Activated naive CD4-positive, alpha-beta T cell treated with anti-CD3 and anti-CD28 coated beads for 36 hours (primary cell): ENCODE measurements at regions of chr16 and their contacts with region 1.

Region 1: GRCh38 chr16:53435066-53435688 is 906 bp downstream of the RBL2 start:
- DNase-seq: peak; percentile 71
- H3K4me3 Mint-ChIP-seq: peak overlapping the region; percentile 96
- H3K27ac Mint-ChIP-seq: peak overlapping the region; percentile 93
- H3K4me1 Mint-ChIP-seq: peaks cover 36% of the 10 kb centered on the region
- H3K27me3 Mint-ChIP-seq: no peaks in the 10 kb centered on the region

Region 2: DNA sequence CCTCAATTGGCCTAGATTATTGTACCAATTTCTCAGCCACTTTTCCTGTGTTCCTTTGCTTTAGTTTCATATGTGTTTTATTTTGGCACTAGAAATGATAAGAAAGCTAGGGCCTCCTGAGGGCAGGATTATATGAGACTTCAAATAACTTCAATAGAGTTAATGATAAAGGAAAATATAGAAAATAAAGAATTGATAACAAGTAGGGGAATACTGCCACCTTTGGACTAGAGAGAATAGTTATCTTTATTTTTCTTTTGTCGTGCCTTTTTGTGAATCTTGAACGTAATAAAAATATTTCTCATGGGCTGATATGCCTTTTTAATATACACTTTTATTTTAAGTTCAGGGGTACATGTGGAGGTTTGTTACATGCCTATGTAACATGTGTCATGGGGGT is 30.2 kb before region 1 on chr16:
- CTCF ChIA-PET with region 1: no interaction called
- intact Hi-C with region 1: no loop called
- DNase-seq: no peak
- H3K4me3 Mint-ChIP-seq: no peak overlapping the region
- H3K27ac Mint-ChIP-seq: no peak overlapping the region
- H3K4me1 Mint-ChIP-seq: no peaks in the 10 kb centered on the region
- H3K27me3 Mint-ChIP-seq: no peaks in the 10 kb centered on the region

Region 3: DNA sequence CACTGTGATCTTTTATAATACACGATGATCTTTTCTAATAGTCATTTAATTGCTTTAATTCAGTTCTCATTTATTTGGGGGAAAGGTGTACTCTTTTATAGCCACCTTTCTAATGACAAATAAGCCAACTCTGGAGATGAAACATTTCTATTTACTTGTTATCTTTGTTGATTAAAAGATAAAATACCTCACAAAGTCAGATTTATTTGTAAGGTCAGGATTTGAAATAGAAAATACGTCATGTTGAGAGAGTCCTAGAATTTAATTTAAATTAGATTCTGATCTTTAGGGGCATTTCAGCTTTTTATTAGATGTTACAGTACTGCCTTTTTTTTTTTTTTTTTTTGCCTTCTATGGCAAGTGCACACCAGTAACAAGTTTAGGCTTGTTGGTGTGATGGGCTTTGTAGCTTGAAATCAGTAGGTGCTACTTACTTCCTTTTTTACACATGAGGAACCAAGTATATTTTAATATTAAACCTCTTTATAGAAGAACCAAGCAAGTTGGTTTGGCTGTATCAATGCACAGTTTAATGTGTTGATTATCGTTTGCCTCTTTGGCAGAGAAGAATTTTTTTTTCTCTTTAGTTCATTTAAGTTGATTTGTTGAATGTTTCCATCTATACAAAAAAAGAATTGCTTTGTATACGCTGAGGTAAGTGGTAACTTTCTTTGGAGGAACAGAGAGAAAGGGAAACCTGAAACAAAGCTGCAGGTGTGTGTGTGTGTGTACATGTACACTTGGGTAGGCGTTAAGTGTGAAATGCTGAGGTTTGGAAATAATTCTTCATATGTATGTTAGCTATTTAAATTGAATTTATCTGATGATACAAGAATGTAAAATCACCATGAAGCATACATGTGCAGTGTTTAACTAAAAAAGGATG is 14.7 kb after region 1 on chr16:
- CTCF ChIA-PET with region 1: interaction called, 4 read pairs
- intact Hi-C with region 1: loop called (anchors 1 kb)
- DNase-seq: no peak
- H3K4me3 Mint-ChIP-seq: peak overlapping the region; percentile 22
- H3K27ac Mint-ChIP-seq: peak overlapping the region; percentile 77
- H3K4me1 Mint-ChIP-seq: peaks cover 52% of the 10 kb centered on the region
- H3K27me3 Mint-ChIP-seq: no peaks in the 10 kb centered on the region

Region 4: DNA sequence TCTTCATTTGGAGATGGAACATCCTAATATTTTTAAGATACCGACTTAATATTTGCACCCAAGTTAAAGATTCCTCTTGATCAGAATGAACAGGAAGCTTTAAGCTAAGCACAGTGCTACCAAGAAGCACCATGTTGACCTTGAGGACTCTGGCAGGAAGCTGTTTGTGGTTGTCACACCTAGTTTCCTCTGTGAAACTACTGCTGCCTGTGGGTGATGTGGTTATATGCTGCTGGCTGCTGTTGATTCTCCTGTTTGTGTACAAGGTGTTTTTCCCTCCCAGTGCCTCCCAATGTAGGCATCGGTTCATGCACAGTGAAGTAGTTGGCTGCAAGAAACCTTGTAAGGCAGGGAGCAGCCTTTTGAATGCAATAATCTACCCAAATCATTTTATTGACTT is 22.5 kb after region 1 on chr16:
- CTCF ChIA-PET with region 1: interaction called, 6 read pairs
- intact Hi-C with region 1: loop called (anchors 1 kb)
- DNase-seq: peak; percentile 87
- H3K4me3 Mint-ChIP-seq: peak overlapping the region; percentile 57
- H3K27ac Mint-ChIP-seq: peak overlapping the region; percentile 94
- H3K4me1 Mint-ChIP-seq: peaks cover 86% of the 10 kb centered on the region
- H3K27me3 Mint-ChIP-seq: no peaks in the 10 kb centered on the region

Region 5: DNA sequence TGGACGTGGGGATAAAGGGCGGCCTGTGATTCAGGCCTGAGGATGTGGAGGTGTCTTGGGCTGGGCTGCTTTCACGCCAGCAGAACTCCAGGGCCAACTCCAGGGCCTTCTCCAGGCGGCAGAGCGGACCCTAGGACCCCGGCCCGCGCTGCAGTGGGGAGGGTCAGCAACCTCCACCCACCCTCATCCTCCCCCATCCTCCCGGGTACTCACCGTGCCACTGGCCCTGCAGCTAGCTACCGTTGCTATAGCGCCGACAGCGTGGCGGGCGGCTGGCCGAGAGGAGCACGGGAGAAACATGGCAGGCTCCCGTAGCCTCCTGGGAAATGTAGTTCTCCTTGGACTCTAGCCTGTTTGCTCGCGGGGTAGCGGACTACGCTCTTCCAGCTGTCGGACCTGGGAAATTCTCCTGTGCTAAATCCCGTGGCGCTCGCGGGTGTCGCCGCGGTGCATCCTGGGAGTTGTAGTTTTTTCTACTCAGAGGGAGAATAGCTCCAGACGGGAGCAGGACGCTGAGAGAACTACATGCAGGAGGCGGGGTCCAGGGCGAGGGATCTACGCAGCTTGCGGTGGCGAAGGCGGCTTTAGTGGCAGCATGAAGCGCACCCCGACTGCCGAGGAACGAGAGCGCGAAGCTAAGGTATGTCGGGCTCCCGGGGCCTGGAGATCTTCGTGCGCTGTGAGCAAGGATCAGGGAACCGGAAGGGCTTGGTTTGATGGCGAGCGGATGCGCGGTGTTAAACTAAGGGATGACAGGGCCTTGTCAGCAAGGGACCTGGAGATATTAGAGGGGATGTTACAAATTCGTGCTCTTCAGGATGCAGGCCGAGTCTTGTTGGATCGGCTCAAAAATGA is 268.6 kb after region 1 on chr16 and contains the starts of genes FTO and RPGRIP1L:
- CTCF ChIA-PET with region 1: no interaction called
- intact Hi-C with region 1: loop called (anchors 2 kb)
- DNase-seq: peak; percentile 99
- H3K4me3 Mint-ChIP-seq: peak within 1 kb of the TSS; percentile 100
- H3K27ac Mint-ChIP-seq: peak within 1 kb of the TSS; percentile 89
- H3K4me1 Mint-ChIP-seq: peaks cover 30% of the 10 kb centered on the region
- H3K27me3 Mint-ChIP-seq: no peaks in the 10 kb centered on the region
- total RNA-seq, gene FTO: 60.2 to 63.9 TPM
- total RNA-seq, gene RPGRIP1L: 4.3 to 5.2 TPM